Right ventricle myocardium inferior (tissue), 1 donor: ENCODE measurements at regions of chr4 and their contacts with region 1.

Region 1: GRCh38 chr4:59400334-59400733 is 1799.8 kb upstream of the ADGRL3 start:
- DNase-seq: no peak
- ATAC-seq: no peak

Region 2: GRCh38 chr4:59091146-59092142 is 308.9 kb before region 1 on chr4:
- intact Hi-C with region 1: loop called (anchors 5 kb)
- DNase-seq: no peak
- ATAC-seq: no peak